HEK293 (cell line): ENCODE measurements at regions of chr10 and their contacts with region 1.

Region 1: DNA sequence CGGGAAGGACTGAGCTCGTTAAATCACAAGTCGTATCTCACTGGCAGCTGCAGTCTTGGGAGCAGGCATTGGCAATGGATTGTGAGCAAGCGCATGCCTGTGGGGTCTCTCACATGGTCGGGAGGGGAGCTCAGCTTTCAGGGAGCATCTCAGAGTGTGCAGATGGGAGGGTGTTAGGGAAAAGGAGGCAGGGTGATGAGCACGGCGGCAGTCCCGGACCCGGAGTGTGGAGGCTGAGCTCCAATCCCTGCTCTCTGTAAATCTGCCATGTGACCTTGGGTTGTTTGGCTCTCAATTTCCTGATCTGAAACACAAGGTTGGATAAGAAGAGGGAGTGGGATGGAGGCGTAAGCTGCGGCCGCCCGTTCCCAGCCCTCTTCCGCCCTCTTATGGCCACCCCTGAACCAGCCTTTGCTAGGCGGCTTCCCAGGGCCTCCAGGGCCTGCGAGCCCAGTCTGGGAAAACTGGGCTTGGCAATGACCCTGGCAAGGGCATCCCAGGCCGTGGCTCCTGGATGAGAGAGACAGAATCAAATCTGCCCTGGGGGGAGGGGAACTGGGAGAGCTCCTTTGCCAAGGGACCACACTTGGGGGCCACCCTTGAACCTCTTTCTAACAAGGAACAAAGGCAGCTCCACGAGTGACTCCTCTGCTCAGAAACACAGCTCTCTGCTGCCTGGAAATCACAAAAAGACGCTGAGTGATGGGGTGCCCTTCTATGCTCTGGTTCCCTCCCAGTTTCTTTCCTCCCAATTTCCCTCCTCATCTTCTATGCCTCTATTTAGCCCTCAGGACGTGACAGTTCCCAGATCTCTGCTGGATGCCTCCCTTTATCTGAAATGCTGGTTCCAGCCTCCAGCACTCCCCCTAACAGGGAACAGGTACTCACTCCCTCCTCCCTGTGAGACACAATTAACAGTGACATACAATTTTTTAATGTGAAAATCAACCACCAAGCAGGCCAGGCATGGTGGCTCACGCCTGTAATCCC is 41.7 kb upstream of the LOXL4 start:
- H3K4me3 ChIP-seq: no peak overlapping the region
- H3K27ac ChIP-seq: no peak overlapping the region
- H3K4me1 ChIP-seq: no peaks in the 10 kb centered on the region
- CTCF ChIP-seq: peak; percentile 84

Region 2: GRCh38 chr10:98170249-98171117 is 139.2 kb before region 1 on chr10:
- CTCF ChIA-PET with region 1: interaction called, 105 read pairs
- POLR2A ChIA-PET with region 1: interaction called, 3 read pairs
- H3K4me3 ChIP-seq: no peak overlapping the region
- H3K27ac ChIP-seq: no peak overlapping the region
- H3K4me1 ChIP-seq: 0 out of 2 replicates have a peak, but pooled peaks cover 3% of the 10 kb centered on the region
- CTCF ChIP-seq: peak; percentile 55; the same call in 1 of the 2 replicates

Region 3: GRCh38 chr10:98253499-98253898 is 56.2 kb before region 1 on chr10:
- CTCF ChIA-PET with region 1: interaction called, 24 read pairs
- POLR2A ChIA-PET with region 1: no interaction called
- H3K4me3 ChIP-seq: no peak overlapping the region
- H3K27ac ChIP-seq: no peak overlapping the region
- H3K4me1 ChIP-seq: no peaks in the 10 kb centered on the region; the same call in 1 of the 2 replicates
- CTCF ChIP-seq: no peak

Region 4: GRCh38 chr10:98269072-98269912 is 40.4 kb before region 1 on chr10:
- CTCF ChIA-PET with region 1: interaction called, 20 read pairs
- POLR2A ChIA-PET with region 1: no interaction called
- H3K4me3 ChIP-seq: no peak overlapping the region
- H3K27ac ChIP-seq: no peak overlapping the region
- H3K4me1 ChIP-seq: no peaks in the 10 kb centered on the region
- CTCF ChIP-seq: no peak

Region 5: DNA sequence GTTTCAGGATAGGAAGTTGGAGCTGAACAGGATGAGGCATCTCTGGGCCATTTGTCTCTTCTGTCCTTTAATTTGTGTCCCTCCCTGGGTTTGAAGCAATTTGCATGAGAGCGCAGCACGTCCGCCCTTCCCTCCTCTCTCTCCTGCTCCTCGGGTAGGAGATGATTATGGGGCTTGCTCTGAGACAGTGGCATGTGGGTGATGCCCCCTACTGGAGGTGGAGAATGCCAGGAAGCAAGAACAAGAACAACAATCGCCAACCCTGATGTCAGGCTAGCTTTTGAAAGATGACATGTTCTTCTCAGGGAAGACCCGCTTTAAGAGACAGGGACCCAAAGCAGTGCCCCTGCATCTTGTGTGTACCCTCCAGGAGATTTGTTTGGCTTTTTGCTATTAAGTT is 22.2 kb after region 1 on chr10:
- CTCF ChIA-PET with region 1: interaction called, 15 read pairs
- POLR2A ChIA-PET with region 1: no interaction called
- H3K4me3 ChIP-seq: no peak overlapping the region
- H3K27ac ChIP-seq: no peak overlapping the region
- H3K4me1 ChIP-seq: peaks cover 7% of the 10 kb centered on the region; the same call in 1 of the 2 replicates
- CTCF ChIP-seq: peak; percentile 26; the same call in 1 of the 2 replicates

Region 6: DNA sequence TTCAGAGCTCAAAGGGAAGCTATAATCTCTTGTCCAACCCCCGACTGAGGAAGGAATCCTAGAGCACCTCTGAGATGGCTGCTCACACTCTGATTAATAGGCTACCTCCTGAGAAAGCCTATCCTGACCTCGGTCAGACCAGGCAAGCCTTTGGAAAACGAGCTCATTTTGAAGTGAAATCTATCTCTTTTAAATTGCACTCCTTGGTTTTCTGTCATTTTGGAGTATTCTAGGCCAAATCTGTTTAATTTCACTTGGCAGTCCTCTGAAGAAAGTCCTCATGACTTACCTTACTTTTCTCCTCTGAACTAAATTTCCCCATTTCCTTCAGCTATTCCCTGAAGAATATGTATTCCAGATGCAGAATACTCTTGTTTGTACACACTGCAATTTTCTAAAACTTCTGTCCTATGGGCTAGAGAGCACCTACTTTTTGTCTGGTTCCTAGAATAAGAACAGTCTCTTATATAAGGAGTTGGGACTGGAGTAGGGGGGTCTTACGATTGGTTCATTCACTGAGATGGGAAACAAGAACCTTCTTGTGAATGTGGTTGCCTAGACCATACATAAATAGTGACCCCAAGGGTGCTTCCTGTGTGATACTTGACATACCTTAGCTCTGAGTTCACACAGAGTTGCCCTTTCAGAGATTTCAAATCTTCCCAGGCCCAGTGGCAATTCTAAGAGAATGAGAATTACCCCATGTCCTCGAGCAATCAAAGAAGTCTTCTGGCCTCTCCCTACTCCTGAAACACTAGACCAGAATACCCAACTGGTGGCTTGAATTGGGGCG is 169.0 kb after region 1 on chr10:
- CTCF ChIA-PET with region 1: no interaction called
- POLR2A ChIA-PET with region 1: no interaction called
- H3K4me3 ChIP-seq: no peak overlapping the region
- H3K27ac ChIP-seq: no peak overlapping the region
- H3K4me1 ChIP-seq: no peaks in the 10 kb centered on the region
- CTCF ChIP-seq: no peak